Testis (tissue), 5 donors: ENCODE measurements at regions of chr7 and their contacts with region 1.

Region 1: DNA sequence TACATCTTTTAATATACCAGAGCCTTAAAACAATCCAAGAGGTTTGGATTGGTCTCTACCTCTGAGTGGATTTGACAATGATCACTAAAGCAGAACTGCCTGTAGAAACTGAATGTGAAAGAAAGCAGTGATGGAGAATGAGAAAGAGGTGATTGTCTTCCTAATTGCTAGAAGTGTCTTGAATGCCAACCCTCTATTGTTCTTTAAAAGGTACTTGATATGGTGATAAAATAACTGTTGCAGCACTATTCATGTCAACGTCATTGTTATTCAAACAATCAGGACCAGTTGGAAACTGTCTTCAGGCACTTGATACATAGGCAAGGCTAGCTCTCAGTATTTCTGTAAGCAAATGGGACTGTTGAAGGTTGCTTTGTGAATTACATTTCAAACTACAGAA is 47.9 kb upstream of the ITPRID1 start:
- DNase-seq: no peak
- H3K4me3 ChIP-seq: no peak overlapping the region
- H3K27ac ChIP-seq: no peak overlapping the region
- H3K4me1 ChIP-seq: no peaks in the 10 kb centered on the region
- H3K27me3 ChIP-seq: no peaks in the 10 kb centered on the region
- CTCF ChIP-seq: no peak
- POLR2A ChIP-seq: no peak

Region 2: DNA sequence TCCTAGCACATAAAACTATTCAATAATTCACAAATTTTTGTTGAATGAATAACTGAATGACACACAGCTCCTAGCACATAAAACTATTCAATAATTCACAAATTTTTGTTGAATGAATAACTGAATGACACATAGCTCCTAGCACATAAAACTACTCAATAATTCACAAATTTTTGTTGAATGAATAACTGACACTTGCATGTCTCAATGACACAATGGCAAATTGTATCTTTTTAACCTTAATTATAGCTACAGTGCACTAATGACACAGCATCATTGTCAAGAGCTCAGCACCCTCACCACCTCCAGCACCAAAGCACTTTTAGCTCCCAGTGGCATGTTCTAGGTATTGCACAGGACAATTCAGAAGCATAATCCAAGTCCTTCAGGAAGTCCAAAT is 472.6 kb after region 1 on chr7:
- intact Hi-C with region 1: no loop called
- DNase-seq: no peak
- H3K4me3 ChIP-seq: no peak overlapping the region
- H3K27ac ChIP-seq: no peak overlapping the region
- H3K4me1 ChIP-seq: no peaks in the 10 kb centered on the region
- H3K27me3 ChIP-seq: no peaks in the 10 kb centered on the region
- CTCF ChIP-seq: no peak
- POLR2A ChIP-seq: no peak

Region 3: DNA sequence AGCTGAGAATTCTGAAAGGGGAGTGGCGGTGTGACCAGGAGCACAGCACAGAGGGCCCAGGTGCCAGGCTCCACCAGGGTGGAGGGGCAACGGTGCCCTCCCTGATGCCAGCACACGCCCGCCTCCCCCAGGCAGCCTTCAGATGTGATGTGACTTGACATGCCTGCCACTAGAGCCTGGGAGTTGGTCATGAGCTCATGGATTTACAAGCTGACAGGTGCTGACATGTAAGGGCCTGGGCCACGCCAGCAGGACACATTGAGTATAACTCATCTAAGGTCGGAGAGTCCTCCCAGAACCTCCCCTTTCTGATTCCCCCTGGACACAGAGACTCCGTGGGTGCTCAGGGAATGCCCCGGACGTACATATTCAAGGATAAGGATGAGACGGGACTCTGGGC is 949.9 kb after region 1 on chr7:
- intact Hi-C with region 1: loop called (anchors 10 kb)
- DNase-seq: no peak
- H3K4me3 ChIP-seq: no peak overlapping the region
- H3K27ac ChIP-seq: no peak overlapping the region
- H3K4me1 ChIP-seq: no peaks in the 10 kb centered on the region
- H3K27me3 ChIP-seq: no peaks in the 10 kb centered on the region
- CTCF ChIP-seq: no peak
- POLR2A ChIP-seq: no peak